PC-3 (cell line): ENCODE measurements at regions of chr3 and their contacts with region 1.

Region 1: DNA sequence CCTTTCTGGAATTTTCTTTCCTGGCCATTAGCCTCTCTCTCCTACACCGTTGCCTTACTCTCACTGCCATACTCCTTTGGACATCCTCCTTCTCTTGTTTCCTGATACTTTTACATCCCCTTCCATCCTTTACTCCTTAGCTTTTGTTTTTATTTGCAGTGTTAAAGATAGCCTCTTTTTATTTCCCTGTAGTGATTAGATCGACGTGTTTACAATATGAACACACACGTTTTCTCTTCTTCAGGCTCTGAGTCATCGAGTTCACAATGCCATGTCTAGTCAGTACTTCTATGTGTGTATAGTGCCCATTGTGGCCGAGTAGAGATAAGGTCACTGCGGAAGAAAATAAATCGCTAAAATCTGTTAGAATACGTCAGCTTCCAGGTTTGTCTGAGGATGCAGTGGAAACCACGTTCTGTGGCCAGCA is 208.5 kb downstream of the LPP start:
- DNase-seq: peak; percentile 95
- ATAC-seq: peak; percentile 95
- H3K4me3 ChIP-seq: no peak overlapping the region
- H3K27ac ChIP-seq: peak overlapping the region; percentile 48
- H3K4me1 ChIP-seq: peaks cover 29% of the 10 kb centered on the region
- H3K27me3 ChIP-seq: no peaks in the 10 kb centered on the region
- CTCF ChIP-seq: peak; percentile 58

Region 2: GRCh38 chr3:187913617-187914291 is 448.7 kb before region 1 on chr3:
- CTCF ChIA-PET with region 1: no interaction called
- POLR2A ChIA-PET with region 1: no interaction called
- intact Hi-C with region 1: loop called (anchors 5 kb)
- DNase-seq: peak; percentile 93
- ATAC-seq: peak; percentile 88
- H3K4me3 ChIP-seq: peak overlapping the region; percentile 47
- H3K27ac ChIP-seq: peak overlapping the region; percentile 91
- H3K4me1 ChIP-seq: peaks cover 48% of the 10 kb centered on the region
- H3K27me3 ChIP-seq: no peaks in the 10 kb centered on the region
- CTCF ChIP-seq: no peak

Region 3: DNA sequence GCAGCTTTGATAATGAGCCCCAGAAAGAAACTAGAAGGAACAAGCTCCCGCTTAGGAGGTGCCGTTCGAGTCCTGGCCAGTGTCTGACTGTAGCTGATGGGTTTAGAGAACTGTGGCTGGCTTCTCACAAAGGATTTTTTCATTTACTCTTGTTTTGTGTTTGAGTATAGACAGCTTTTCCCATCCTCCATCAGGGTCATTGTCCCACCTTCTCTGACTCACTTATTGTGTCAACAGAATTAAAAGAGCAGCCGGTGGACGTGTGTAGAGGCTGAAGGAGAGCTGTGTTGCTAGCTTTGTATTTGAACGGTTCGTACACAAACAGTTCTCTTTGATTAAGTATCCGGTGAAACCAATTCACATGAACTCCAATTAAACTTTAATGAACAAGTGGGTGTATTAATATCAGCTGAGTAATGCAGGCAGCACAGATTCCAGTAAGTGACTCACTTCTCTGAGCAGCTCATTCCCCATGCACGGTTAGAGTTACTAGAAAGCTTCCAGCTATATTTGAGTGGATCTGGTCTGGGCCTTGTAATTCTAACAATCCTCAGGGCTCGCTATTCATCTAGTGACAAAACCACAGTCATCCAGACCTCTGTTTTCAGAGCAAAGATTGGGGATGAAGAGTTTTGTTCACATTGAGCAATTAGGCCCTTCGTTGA is 67.5 kb before region 1 on chr3:
- CTCF ChIA-PET with region 1: interaction called, 3 read pairs
- POLR2A ChIA-PET with region 1: no interaction called
- intact Hi-C with region 1: loop called (anchors 1 kb)
- DNase-seq: peak; percentile 94
- ATAC-seq: peak; percentile 89
- H3K4me3 ChIP-seq: peak overlapping the region; percentile 22; the same call in 1 of the 2 replicates
- H3K27ac ChIP-seq: peak overlapping the region; percentile 85
- H3K4me1 ChIP-seq: peaks cover 62% of the 10 kb centered on the region
- H3K27me3 ChIP-seq: no peaks in the 10 kb centered on the region
- CTCF ChIP-seq: no peak

Region 4: DNA sequence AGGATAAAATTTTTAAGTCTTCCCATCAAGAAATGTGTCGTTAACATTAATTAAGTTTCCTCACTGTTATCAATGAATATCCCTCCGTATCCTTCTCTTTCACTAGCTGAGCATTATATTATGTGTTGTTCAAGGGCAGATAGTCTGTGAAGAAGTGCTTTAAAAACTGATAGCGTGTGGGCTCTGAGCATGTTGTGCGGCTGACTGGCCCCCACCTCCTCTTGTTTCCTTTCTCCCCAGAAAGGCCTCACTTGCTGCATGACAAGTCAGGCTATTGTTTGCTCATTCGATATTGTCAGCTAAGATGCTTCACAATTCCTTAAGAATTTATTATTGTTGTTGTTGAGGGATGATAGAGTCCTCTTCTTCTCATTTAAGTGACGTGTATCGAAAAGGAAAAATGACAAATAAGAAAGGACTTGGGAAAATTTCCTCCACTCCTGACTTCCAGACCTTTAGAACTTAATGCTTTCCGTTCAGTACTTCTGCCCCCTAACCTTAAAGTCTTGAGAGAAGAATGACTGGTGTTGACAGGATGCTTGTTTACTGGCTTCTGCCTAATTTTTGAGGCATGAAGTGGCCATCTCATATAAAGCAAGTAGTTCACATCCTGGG is 89.8 kb after region 1 on chr3:
- CTCF ChIA-PET with region 1: no interaction called
- POLR2A ChIA-PET with region 1: no interaction called
- intact Hi-C with region 1: no loop called
- DNase-seq: no peak
- ATAC-seq: no peak
- H3K4me3 ChIP-seq: no peak overlapping the region
- H3K27ac ChIP-seq: no peak overlapping the region
- H3K4me1 ChIP-seq: no peaks in the 10 kb centered on the region
- H3K27me3 ChIP-seq: no peaks in the 10 kb centered on the region
- CTCF ChIP-seq: no peak

Region 5: GRCh38 chr3:188489639-188490405 is 127.4 kb after region 1 on chr3:
- CTCF ChIA-PET with region 1: no interaction called
- POLR2A ChIA-PET with region 1: no interaction called
- intact Hi-C with region 1: no loop called
- DNase-seq: no peak
- ATAC-seq: peak; percentile 10; the same call in 1 of the 2 replicates
- H3K4me3 ChIP-seq: no peak overlapping the region
- H3K27ac ChIP-seq: no peak overlapping the region
- H3K4me1 ChIP-seq: peaks cover 21% of the 10 kb centered on the region
- H3K27me3 ChIP-seq: no peaks in the 10 kb centered on the region
- CTCF ChIP-seq: no peak

Region 6: DNA sequence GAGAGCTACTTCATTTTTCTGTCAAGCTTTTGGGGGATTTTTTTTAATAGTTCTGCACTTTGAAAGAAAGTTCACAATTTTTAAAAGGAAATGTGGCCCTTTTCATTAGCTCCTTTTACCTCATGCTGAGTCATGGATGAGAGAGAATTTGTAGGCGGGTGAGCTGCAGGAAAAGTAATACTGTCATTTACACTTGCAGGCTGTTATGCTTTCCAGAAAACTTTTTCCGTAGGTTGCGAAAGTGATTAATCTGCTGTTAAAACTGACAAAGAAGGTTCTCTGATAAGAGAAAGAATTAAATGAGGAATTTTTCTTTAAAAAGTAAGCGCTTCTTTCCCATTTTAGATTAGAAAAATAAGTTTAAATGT is 221.7 kb after region 1 on chr3:
- CTCF ChIA-PET with region 1: interaction called, 8 read pairs
- POLR2A ChIA-PET with region 1: no interaction called
- intact Hi-C with region 1: loop called (anchors 10 kb)
- DNase-seq: peak; percentile 68
- ATAC-seq: peak; percentile 64
- H3K4me3 ChIP-seq: peak overlapping the region; percentile 39
- H3K27ac ChIP-seq: peak overlapping the region; percentile 88
- H3K4me1 ChIP-seq: peaks cover 29% of the 10 kb centered on the region
- H3K27me3 ChIP-seq: no peaks in the 10 kb centered on the region
- CTCF ChIP-seq: no peak

Region 7: GRCh38 chr3:189148081-189148507 is 785.7 kb after region 1 on chr3:
- CTCF ChIA-PET with region 1: no interaction called
- POLR2A ChIA-PET with region 1: no interaction called
- intact Hi-C with region 1: loop called (anchors 10 kb)
- DNase-seq: peak; percentile 82
- ATAC-seq: peak; percentile 80
- H3K4me3 ChIP-seq: no peak overlapping the region
- H3K27ac ChIP-seq: no peak overlapping the region
- H3K4me1 ChIP-seq: no peaks in the 10 kb centered on the region
- H3K27me3 ChIP-seq: no peaks in the 10 kb centered on the region
- CTCF ChIP-seq: peak; percentile 90